ENCODE measurements at regions of chr21 and their contacts with region 1.

Region 1: GRCh38 chr21:31354604-31355443 is 10.8 kb upstream of the TIAM1 start:
- DNase-seq: peak; percentile 85
- H3K4me3 Mint-ChIP-seq: peak overlapping the region; percentile 38
- H3K27ac Mint-ChIP-seq: peak overlapping the region; percentile 77
- H3K4me1 Mint-ChIP-seq: peaks cover 14% of the 10 kb centered on the region
- H3K27me3 Mint-ChIP-seq: peaks cover 2% of the 10 kb centered on the region

Region 2: GRCh38 chr21:31161157-31161556 is 193.7 kb before region 1 on chr21:
- intact Hi-C with region 1: no loop called
- DNase-seq: no peak
- H3K4me3 Mint-ChIP-seq: no peak overlapping the region
- H3K27ac Mint-ChIP-seq: no peak overlapping the region
- H3K4me1 Mint-ChIP-seq: peaks cover 66% of the 10 kb centered on the region
- H3K27me3 Mint-ChIP-seq: no peaks in the 10 kb centered on the region

Region 3: GRCh38 chr21:31273278-31273677 is 81.5 kb before region 1 on chr21:
- intact Hi-C with region 1: loop called (anchors 2 kb)
- DNase-seq: no peak
- H3K4me3 Mint-ChIP-seq: no peak overlapping the region
- H3K27ac Mint-ChIP-seq: peak overlapping the region; percentile 46
- H3K4me1 Mint-ChIP-seq: peaks cover 23% of the 10 kb centered on the region
- H3K27me3 Mint-ChIP-seq: no peaks in the 10 kb centered on the region

Region 4: DNA sequence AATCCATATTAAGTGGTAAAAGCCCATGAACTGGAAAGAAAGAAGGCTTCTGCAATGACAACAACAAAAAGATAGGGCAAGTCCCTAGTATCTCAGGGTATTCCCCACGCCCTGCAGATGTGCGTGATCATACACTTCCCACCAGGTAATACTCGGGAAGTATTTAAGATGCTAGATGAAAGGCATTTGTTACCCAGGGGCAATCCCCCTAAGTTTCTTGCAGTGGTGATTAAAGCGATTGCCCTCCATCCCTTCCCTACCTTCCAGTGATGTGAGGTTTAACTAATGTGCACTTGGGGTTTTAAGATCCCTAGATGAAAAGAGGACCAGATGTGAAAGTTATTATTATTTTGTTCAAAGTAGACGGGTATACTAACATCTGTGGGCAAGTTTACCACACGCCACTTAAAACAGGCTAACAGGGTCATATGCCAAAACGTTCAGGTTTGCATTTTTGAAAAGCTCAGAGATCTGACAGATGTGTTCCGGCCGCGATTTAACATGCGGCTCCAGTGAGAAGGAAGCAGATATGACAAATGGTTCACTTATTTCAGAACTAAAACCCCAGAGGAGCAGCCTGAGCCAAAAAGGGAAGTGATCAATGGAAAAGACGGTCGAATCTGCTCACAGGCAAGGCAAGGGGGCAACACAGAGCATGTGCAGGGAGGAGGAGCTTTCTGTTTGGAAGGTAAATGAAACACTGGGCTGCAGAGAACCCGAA is 28.1 kb before region 1 on chr21:
- intact Hi-C with region 1: loop called (anchors 1 kb)
- DNase-seq: peak; percentile 37
- H3K4me3 Mint-ChIP-seq: peak overlapping the region; percentile 37
- H3K27ac Mint-ChIP-seq: peak overlapping the region; percentile 82
- H3K4me1 Mint-ChIP-seq: peaks cover 43% of the 10 kb centered on the region
- H3K27me3 Mint-ChIP-seq: no peaks in the 10 kb centered on the region

Region 5: GRCh38 chr21:31426235-31426797 is 71.5 kb after region 1 on chr21:
- intact Hi-C with region 1: loop called (anchors 1 kb)
- DNase-seq: peak; percentile 2
- H3K4me3 Mint-ChIP-seq: peak overlapping the region; percentile 50
- H3K27ac Mint-ChIP-seq: peak overlapping the region; percentile 64
- H3K4me1 Mint-ChIP-seq: peaks cover 16% of the 10 kb centered on the region
- H3K27me3 Mint-ChIP-seq: peaks cover 10% of the 10 kb centered on the region

Region 6: DNA sequence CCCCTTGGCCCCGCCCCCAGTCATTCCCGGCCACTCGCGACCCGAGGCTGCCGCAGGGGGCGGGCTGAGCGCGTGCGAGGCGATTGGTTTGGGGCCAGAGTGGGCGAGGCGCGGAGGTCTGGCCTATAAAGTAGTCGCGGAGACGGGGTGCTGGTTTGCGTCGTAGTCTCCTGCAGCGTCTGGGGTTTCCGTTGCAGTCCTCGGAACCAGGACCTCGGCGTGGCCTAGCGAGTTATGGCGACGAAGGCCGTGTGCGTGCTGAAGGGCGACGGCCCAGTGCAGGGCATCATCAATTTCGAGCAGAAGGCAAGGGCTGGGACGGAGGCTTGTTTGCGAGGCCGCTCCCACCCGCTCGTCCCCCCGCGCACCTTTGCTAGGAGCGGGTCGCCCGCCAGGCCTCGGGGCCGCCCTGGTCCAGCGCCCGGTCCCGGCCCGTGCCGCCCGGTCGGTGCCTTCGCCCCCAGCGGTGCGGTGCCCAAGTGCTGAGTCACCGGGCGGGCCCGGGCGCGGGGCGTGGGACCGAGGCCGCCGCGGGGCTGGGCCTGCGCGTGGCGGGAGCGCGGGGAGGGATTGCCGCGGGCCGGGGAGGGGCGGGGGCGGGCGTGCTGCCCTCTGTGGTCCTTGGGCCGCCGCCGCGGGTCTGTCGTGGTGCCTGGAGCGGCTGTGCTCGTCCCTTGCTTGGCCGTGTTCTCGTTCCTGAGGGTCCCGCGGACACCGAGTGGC is 304.9 kb after region 1 on chr21 and contains the start of gene SOD1:
- intact Hi-C with region 1: loop called (anchors 2 kb)
- DNase-seq: peak; percentile 96
- H3K4me3 Mint-ChIP-seq: peak within 1 kb of the TSS; percentile 99
- H3K27ac Mint-ChIP-seq: peak within 1 kb of the TSS; percentile 100
- H3K4me1 Mint-ChIP-seq: peaks cover 76% of the 10 kb centered on the region
- H3K27me3 Mint-ChIP-seq: no peaks in the 10 kb centered on the region
- total RNA-seq, gene SOD1: 346 and 354 TPM in 2 replicates

Measured in activated T-helper 1 cell treated with anti-CD3 and anti-CD28 coated beads, Interleukin-12 subunit alpha, Interleukin-12 subunit beta, Interleukin-2, Interleukin-4 antibody, amounts not matched to agents 30 ng/mL and 10 ng/mL and 1 ng/mL, durations not matched to agents 14 hours and 24 hours and 36 hours (primary cell).